BJ (cell line): ENCODE measurements at regions of chr4 and their contacts with region 1.

Region 1: GRCh38 chr4:110550260-110550659 is 72.6 kb downstream of the PITX2 start:
- DNase-seq: no peak
- H3K4me3 ChIP-seq: no peak overlapping the region
- H3K27me3 ChIP-seq: no peaks in the 10 kb centered on the region
- CTCF ChIP-seq: no peak

Region 2: GRCh38 chr4:110636680-110637407 is 86.6 kb after region 1 on chr4:
- CTCF ChIA-PET with region 1: no interaction called
- POLR2A ChIA-PET with region 1: no interaction called
- DNase-seq: no peak
- H3K4me3 ChIP-seq: peak overlapping the region; percentile 34
- H3K27me3 ChIP-seq: peaks cover 59% of the 10 kb centered on the region
- CTCF ChIP-seq: no peak

Region 3: DNA sequence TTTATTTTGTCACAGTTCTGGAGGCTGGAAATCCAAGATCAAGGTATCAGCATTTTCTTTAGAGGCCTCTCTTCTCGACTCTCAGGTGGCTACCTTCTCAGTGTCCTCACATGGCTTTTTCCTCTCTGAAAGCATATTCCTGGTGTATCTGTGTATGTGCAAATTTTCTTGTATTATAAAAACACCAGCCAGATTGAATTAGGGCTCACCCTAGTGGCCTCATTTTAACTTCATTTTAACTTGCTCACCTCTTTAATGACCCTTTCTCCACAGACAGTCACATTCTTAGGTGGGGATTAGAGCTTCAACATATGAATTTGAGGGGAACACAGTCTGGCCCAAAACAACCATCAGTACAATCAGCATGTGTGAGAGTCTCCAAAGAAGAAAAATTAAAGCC is 1052.6 kb after region 1 on chr4:
- CTCF ChIA-PET with region 1: no interaction called
- POLR2A ChIA-PET with region 1: interaction called, 34 read pairs
- DNase-seq: no peak
- H3K4me3 ChIP-seq: no peak overlapping the region
- H3K27me3 ChIP-seq: no peaks in the 10 kb centered on the region
- CTCF ChIP-seq: peak; percentile 55